ENCODE measurements at regions of chr4 and their contacts with region 1.

Region 1: DNA sequence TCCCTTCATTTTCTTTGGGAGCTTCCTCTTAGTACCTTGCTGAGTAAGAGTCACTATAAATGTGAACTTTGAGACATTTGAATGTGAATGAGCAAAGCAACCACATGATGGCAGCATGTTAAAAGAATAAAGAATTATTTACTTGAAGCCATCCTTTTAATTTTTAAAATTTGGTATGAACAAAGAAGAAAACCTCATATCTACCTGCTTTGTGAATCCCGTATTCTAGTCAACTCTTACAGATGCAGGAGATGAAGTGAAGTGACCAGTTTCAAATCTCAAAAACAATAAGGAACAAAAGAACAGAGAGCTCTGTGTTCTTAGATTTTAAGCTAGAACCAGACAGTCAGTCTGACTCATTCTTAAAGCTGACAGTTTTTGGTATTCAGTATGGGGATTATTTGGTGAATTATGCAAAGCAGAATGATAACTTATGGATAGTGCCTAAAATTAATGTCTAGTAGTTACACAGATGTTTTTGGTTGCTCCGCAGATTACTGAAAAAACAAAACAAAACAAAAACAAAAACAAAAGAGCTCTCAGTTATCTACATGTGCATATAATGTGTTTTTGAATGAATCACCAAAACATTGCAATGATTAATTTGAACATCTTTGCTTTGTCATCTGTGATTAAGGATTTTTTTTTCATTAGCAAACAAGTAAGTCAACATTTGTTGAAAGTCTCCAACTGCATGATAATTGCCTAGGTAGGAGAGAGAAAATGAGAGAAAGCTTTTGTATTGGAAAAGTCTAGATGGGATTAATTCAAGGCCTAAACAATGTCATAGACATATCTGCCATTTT is 48.2 kb upstream of the H2AZ1 start:
- DNase-seq: peak; percentile 44
- H3K4me3 Mint-ChIP-seq: no peak overlapping the region
- H3K27ac Mint-ChIP-seq: peak overlapping the region; percentile 80
- H3K4me1 Mint-ChIP-seq: peaks cover 10% of the 10 kb centered on the region
- H3K27me3 Mint-ChIP-seq: no peaks in the 10 kb centered on the region
- CTCF ChIP-seq: peak; percentile 51

Region 2: DNA sequence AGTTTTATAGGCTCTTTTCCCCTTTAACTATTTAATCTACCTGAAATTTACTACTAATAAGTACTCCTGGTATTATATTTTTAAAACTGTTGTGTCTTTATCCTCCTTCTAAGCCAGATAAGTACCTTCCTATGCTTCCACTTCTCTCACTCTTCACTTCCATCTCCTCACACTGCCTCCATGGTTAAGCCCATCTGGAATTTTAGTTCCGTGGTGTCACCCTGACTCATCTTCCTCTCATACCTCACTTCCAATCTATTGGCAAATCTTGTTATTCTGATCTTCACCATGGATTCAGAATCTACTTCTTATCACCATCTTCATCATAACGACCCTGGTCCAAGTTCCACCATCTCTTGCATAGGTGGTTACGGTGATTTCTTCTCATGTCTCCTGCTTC is 214.3 kb before region 1 on chr4:
- CTCF ChIA-PET with region 1: no interaction called
- POLR2A ChIA-PET with region 1: no interaction called
- intact Hi-C with region 1: no loop called
- DNase-seq: no peak
- H3K4me3 Mint-ChIP-seq: no peak overlapping the region
- H3K27ac Mint-ChIP-seq: no peak overlapping the region
- H3K4me1 Mint-ChIP-seq: peaks cover 6% of the 10 kb centered on the region
- H3K27me3 Mint-ChIP-seq: no peaks in the 10 kb centered on the region
- CTCF ChIP-seq: no peak

Region 3: DNA sequence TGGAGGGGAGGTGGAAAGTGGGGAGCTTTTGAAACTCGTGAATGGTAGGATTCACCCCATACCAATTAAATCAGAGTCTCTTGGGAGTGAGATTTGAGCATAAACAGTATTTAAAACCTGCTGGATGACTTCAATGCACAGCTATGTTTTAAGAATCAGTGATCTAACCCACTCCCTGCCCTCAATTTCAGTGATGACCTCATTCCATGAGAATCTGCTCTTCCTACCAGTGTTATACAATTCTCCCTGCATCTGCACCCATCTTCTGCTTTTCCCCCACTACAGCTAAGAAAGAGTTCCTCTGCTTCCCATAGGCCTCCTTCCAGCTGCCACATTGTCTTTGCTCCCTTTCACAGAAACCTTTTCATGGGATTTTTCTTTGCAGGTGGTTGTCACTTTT is 29.9 kb before region 1 on chr4:
- CTCF ChIA-PET with region 1: no interaction called
- POLR2A ChIA-PET with region 1: no interaction called
- intact Hi-C with region 1: no loop called
- DNase-seq: peak; percentile 8
- H3K4me3 Mint-ChIP-seq: no peak overlapping the region
- H3K27ac Mint-ChIP-seq: no peak overlapping the region
- H3K4me1 Mint-ChIP-seq: peaks cover 11% of the 10 kb centered on the region
- H3K27me3 Mint-ChIP-seq: no peaks in the 10 kb centered on the region
- CTCF ChIP-seq: no peak

Region 4: GRCh38 chr4:99987681-99988080 is 10.6 kb before region 1 on chr4:
- CTCF ChIA-PET with region 1: interaction called, 14 read pairs
- POLR2A ChIA-PET with region 1: no interaction called
- intact Hi-C with region 1: no loop called
- DNase-seq: no peak
- H3K4me3 Mint-ChIP-seq: no peak overlapping the region
- H3K27ac Mint-ChIP-seq: no peak overlapping the region
- H3K4me1 Mint-ChIP-seq: no peaks in the 10 kb centered on the region
- H3K27me3 Mint-ChIP-seq: no peaks in the 10 kb centered on the region
- CTCF ChIP-seq: no peak

Region 5: DNA sequence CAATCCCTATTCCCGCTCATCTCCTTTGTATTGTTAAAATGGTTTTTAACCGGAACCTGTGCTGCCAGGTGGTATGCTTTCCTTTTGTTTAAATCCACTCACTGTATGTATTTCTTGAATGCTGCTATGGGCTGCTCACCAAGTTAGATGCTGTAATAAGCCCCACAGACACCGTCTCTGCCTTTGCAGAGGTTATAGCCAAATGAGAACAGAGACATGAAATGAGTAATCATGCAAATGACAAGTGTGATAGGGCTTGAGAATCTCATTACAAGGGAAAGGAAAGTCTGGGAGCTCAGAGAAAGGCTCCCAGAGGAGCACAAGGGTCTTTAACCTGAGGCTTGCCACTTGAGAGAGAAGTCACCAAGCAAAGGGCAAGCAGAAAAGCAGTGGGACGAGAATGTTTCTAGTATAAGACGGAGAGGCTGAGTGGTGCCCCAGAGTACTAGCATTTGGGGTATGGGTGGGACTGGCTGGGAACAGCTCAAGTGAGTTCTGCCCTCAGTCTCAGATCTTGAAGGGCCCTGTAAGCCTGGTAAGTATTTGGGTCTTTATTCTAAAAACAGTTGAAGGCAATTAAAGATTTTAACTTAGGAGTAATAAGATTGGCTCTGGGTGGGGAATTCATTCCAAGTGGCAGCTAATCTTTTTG is 62.6 kb after region 1 on chr4:
- CTCF ChIA-PET with region 1: interaction called, 42 read pairs
- POLR2A ChIA-PET with region 1: interaction called, 6 read pairs
- intact Hi-C with region 1: loop called (anchors 1 kb)
- DNase-seq: no peak
- H3K4me3 Mint-ChIP-seq: no peak overlapping the region
- H3K27ac Mint-ChIP-seq: no peak overlapping the region
- H3K4me1 Mint-ChIP-seq: no peaks in the 10 kb centered on the region
- H3K27me3 Mint-ChIP-seq: no peaks in the 10 kb centered on the region
- CTCF ChIP-seq: no peak

Region 6: GRCh38 chr4:100076743-100077142 is 78.5 kb after region 1 on chr4:
- CTCF ChIA-PET with region 1: interaction called, 13 read pairs
- POLR2A ChIA-PET with region 1: no interaction called
- intact Hi-C with region 1: no loop called
- DNase-seq: peak; percentile 12
- H3K4me3 Mint-ChIP-seq: no peak overlapping the region
- H3K27ac Mint-ChIP-seq: no peak overlapping the region
- H3K4me1 Mint-ChIP-seq: peaks cover 25% of the 10 kb centered on the region
- H3K27me3 Mint-ChIP-seq: no peaks in the 10 kb centered on the region
- CTCF ChIP-seq: no peak

Region 7: GRCh38 chr4:100130491-100130890 is 132.2 kb after region 1 on chr4:
- CTCF ChIA-PET with region 1: no interaction called
- POLR2A ChIA-PET with region 1: no interaction called
- intact Hi-C with region 1: no loop called
- DNase-seq: no peak
- H3K4me3 Mint-ChIP-seq: no peak overlapping the region
- H3K27ac Mint-ChIP-seq: no peak overlapping the region
- H3K4me1 Mint-ChIP-seq: no peaks in the 10 kb centered on the region
- H3K27me3 Mint-ChIP-seq: no peaks in the 10 kb centered on the region
- CTCF ChIP-seq: no peak

Region 8: GRCh38 chr4:100421361-100421978 is 423.2 kb after region 1 on chr4:
- CTCF ChIA-PET with region 1: interaction called, 4 read pairs
- POLR2A ChIA-PET with region 1: no interaction called
- intact Hi-C with region 1: loop called (anchors 5 kb)
- DNase-seq: peak; percentile 58
- H3K4me3 Mint-ChIP-seq: no peak overlapping the region
- H3K27ac Mint-ChIP-seq: peak overlapping the region; percentile 80
- H3K4me1 Mint-ChIP-seq: peaks cover 12% of the 10 kb centered on the region
- H3K27me3 Mint-ChIP-seq: no peaks in the 10 kb centered on the region
- CTCF ChIP-seq: peak; percentile 69

Region 9: GRCh38 chr4:101000496-101000895 is 1002.2 kb after region 1 on chr4:
- CTCF ChIA-PET with region 1: no interaction called
- POLR2A ChIA-PET with region 1: no interaction called
- intact Hi-C with region 1: no loop called
- DNase-seq: no peak
- H3K4me3 Mint-ChIP-seq: no peak overlapping the region
- H3K27ac Mint-ChIP-seq: no peak overlapping the region
- H3K4me1 Mint-ChIP-seq: no peaks in the 10 kb centered on the region
- H3K27me3 Mint-ChIP-seq: no peaks in the 10 kb centered on the region
- CTCF ChIP-seq: no peak